Vagina (tissue), 2 donors: ENCODE measurements at regions of chr1 and their contacts with region 1.

Region 1: DNA sequence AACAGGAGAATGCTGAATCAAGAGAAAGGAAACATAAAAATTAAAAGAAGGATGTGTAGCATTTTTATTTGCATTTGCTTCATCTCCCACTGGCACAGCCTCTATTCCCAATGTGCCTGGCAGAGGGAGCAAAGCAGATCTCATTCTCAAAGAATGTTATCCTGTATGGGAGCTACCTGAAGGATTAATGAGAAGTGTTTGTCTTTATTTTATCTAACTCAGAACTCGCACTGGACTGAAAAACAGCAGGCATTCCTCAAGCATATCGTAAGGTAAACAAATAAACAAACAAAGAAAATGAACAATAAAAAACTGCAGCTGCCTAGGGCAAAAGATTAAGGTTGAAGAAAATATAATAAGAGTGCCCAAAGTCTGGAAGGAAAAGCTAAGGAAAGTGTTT is 12.7 kb upstream of the COL11A1 start:
- DNase-seq: no peak
- H3K4me3 ChIP-seq: no peak overlapping the region
- H3K27ac ChIP-seq: no peak overlapping the region
- H3K4me1 ChIP-seq: no peaks in the 10 kb centered on the region
- H3K27me3 ChIP-seq: no peaks in the 10 kb centered on the region
- CTCF ChIP-seq: no peak
- POLR2A ChIP-seq: no peak

Region 2: GRCh38 chr1:102790997-102791396 is 330.0 kb before region 1 on chr1:
- intact Hi-C with region 1: no loop called
- DNase-seq: no peak
- H3K4me3 ChIP-seq: no peak overlapping the region
- H3K27ac ChIP-seq: no peak overlapping the region
- H3K4me1 ChIP-seq: no peaks in the 10 kb centered on the region
- H3K27me3 ChIP-seq: no peaks in the 10 kb centered on the region
- CTCF ChIP-seq: no peak
- POLR2A ChIP-seq: no peak

Region 3: GRCh38 chr1:103084181-103084580 is 36.8 kb before region 1 on chr1:
- intact Hi-C with region 1: loop called (anchors 2 kb)
- DNase-seq: no peak
- H3K4me3 ChIP-seq: no peak overlapping the region
- H3K27ac ChIP-seq: no peak overlapping the region
- H3K4me1 ChIP-seq: no peaks in the 10 kb centered on the region
- H3K27me3 ChIP-seq: no peaks in the 10 kb centered on the region
- CTCF ChIP-seq: no peak
- POLR2A ChIP-seq: no peak

Region 4: DNA sequence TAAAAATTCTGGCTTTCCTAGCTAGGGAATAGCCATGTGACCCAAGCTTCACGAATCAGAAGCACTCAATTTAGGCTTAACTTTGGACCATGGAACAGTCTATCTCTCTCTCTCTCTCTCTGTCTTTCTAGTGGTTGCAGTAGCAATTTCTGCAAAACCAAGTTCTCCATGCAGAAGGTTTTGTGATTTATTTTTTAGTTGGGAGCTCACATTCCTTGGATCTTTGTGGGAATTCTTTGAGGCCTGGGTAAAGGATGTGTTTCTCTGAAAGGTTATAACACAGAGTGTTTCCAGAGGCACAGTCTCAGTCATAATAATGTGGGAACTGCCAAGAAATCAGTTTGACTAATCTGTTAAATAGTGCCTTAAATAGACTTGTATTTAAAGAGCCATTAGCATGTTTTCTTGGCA is 99.7 kb after region 1 on chr1:
- intact Hi-C with region 1: no loop called
- DNase-seq: no peak
- H3K4me3 ChIP-seq: no peak overlapping the region
- H3K27ac ChIP-seq: no peak overlapping the region
- H3K4me1 ChIP-seq: no peaks in the 10 kb centered on the region
- H3K27me3 ChIP-seq: no peaks in the 10 kb centered on the region
- CTCF ChIP-seq: no peak
- POLR2A ChIP-seq: no peak